HepG2 (cell line): ENCODE measurements at regions of chr4 and their contacts with region 1.

Region 1: GRCh38 chr4:7192252-7193029 is at the start of gene SORCS2:
- DNase-seq: peak; percentile 12
- ATAC-seq: peak; percentile 89
- H3K4me3 ChIP-seq: peak within 1 kb of the TSS in 1 of 3 experiments; percentile 33; a peak in 1 of 6 replicates
- H3K27ac ChIP-seq: no peak within 1 kb of the TSS
- H3K4me1 ChIP-seq: no peaks in the 10 kb centered on the region
- H3K27me3 ChIP-seq: peaks cover 11 to 87% of the 10 kb centered on the region in 2 experiments; a peak in 4 of 5 replicates
- CTCF ChIP-seq: peak; percentile 55
- EP300 ChIP-seq: no peak
- POLR2A ChIP-seq: no peak
- RAD21 ChIP-seq: peak; percentile 95
- total RNA-seq, gene SORCS2: 0.66 and 1.0 TPM in 2 replicates

Region 2: DNA sequence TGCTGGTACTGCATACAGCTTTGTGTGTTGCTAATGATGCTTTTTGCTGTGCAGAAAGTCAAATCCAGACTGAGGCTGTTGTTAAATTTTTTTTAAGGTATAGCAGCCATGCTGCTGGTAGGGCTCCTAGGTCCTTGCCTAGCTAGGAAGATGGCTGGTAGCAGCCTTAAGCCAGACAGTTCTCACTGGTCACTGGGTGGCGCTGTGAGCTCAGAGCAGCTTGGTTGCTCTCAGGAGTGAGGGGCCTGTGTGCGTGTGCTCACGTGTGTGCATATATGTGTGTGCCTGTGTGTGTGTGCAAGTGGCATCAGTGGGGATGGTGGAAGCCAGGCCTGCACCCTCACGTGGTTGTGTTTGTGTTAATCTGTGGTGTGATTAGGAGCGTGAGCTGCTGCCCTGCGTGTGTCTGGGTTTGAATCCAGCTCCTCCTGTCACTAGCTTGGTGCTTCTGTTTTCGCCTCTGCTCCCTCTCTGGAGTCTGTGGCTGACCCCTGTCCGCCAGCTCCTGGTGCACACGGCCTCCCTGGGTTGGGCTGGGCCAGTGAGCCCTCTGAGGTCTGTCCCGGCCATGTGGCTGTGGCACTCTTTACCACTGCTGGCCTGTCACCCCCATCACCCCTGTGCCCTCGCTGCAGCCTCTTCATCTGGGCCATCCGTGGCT is 46.0 kb after region 1 on chr4:
- CTCF ChIA-PET with region 1: no interaction called
- POLR2A ChIA-PET with region 1: no interaction called
- in situ Hi-C with region 1: no loop called
- intact Hi-C with region 1: no loop called
- DNase-seq: no peak
- ATAC-seq: no peak
- H3K4me3 ChIP-seq: no peak overlapping the region
- H3K27ac ChIP-seq: no peak overlapping the region
- H3K4me1 ChIP-seq: no peaks in the 10 kb centered on the region
- H3K27me3 ChIP-seq: peaks cover 10 to 19% of the 10 kb centered on the region in 2 experiments
- CTCF ChIP-seq: no peak
- EP300 ChIP-seq: no peak
- POLR2A ChIP-seq: no peak
- RAD21 ChIP-seq: no peak

Region 3: GRCh38 chr4:7295911-7296660 is 103.6 kb after region 1 on chr4:
- CTCF ChIA-PET with region 1: interaction called, 4 read pairs
- POLR2A ChIA-PET with region 1: no interaction called
- in situ Hi-C with region 1: loop called (anchors 5 kb)
- intact Hi-C with region 1: loop called (anchors 1 kb)
- DNase-seq: no peak
- ATAC-seq: peak; percentile 63; the same call in 2 of the 3 replicates
- H3K4me3 ChIP-seq: no peak overlapping the region
- H3K27ac ChIP-seq: no peak overlapping the region
- H3K4me1 ChIP-seq: no peaks in the 10 kb centered on the region
- H3K27me3 ChIP-seq: peaks cover 11 to 70% of the 10 kb centered on the region in 2 experiments; a peak in 4 of 5 replicates
- CTCF ChIP-seq: peak; percentile 74
- EP300 ChIP-seq: no peak
- POLR2A ChIP-seq: no peak
- RAD21 ChIP-seq: peak; percentile 59

Region 4: DNA sequence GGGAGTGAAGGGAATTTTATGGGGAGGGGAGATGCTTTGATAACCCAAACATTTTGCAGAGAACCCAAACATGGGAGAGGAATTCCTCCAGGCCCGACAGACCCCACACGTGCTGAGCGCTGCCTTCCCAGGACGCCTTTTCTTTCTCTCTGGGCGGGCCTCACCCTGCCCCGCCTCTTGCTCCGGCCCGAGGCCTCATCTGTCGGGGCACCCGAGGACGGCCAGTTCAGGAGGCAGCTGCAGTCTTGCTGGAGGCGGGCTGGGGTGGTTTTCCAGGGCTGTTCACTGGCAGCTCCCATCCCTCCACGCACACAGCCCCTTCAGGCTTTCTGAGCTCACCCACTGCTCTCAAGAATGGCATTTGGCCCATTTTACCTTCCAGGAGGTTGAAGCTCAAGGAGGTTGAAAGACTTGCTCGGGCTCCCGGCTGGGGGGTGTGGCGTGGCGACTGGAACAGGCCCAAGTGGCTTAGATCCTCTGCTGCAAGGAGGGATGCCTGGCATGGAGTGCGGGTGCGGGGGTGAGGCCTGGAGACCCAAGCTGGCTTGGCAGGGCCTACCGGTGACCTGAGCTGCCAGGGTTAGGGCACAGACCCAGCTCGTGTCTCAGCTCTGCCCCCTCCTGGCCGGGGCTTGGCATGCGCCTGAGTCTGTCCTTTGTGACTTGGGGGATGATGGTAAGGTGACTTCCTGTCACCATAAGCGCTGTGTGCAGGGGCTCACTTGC is 143.1 kb after region 1 on chr4:
- CTCF ChIA-PET with region 1: interaction called, 13 read pairs
- POLR2A ChIA-PET with region 1: no interaction called
- in situ Hi-C with region 1: loop called (anchors 5 kb)
- intact Hi-C with region 1: loop called (anchors 10 kb)
- DNase-seq: peak; percentile 36
- ATAC-seq: peak; percentile 90
- H3K4me3 ChIP-seq: no peak overlapping the region
- H3K27ac ChIP-seq: no peak overlapping the region
- H3K4me1 ChIP-seq: no peaks in the 10 kb centered on the region
- H3K27me3 ChIP-seq: peaks cover 10 to 45% of the 10 kb centered on the region in 2 experiments; a peak in 4 of 5 replicates
- CTCF ChIP-seq: peak; percentile 88
- EP300 ChIP-seq: no peak
- POLR2A ChIP-seq: no peak
- RAD21 ChIP-seq: 0 out of 2 replicates have a peak, but pooled peaks have one; percentile 31

Region 5: DNA sequence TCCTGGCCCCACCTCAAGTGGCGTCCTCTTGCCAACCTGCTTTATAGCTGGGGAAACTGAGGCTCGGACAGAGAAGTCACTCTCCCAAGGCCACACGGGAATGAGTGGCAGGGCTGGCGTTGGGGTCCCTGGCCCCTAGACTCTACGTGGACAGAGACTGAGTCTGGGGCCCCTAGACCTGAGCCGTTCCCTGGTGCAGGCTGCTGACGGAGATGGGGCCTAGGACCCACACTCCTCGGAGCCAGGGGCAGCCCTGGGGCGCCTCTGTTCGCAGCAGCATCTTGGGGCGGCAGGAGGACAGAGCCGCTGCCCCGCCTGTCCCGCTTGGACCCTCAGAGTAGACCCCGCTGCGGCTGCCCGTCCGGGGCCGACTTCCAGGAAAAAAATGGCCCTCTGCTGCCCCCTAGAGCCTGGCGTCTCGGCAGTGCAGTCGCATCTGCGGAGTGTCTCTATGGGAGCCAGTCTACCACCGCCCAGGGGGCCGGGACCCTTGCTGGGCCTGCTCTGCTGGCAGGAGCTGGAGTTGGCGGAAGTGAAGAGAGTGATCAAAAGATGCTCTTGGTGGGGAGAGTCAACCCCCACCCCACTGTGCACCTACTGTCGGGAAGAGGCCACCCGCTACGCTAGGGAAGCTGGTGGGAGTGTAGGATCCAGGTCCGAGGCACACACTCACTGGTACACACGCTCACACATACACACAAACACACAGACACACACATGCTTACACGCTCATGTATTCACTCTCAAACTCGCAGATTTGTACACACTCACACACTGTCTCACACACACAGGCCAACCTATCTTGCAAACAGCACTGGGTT is 527.1 kb after region 1 on chr4:
- CTCF ChIA-PET with region 1: interaction called, 6 read pairs
- POLR2A ChIA-PET with region 1: no interaction called
- in situ Hi-C with region 1: loop called (anchors 10 kb)
- intact Hi-C with region 1: no loop called
- DNase-seq: peak; percentile 29
- ATAC-seq: peak; percentile 91
- H3K4me3 ChIP-seq: no peak overlapping the region; a peak in 1 of 6 replicates
- H3K27ac ChIP-seq: no peak overlapping the region
- H3K4me1 ChIP-seq: 0 out of 2 replicates have a peak, but pooled peaks cover 4% of the 10 kb centered on the region
- H3K27me3 ChIP-seq: no peaks in the 10 kb centered on the region
- CTCF ChIP-seq: peak; percentile 89
- EP300 ChIP-seq: no peak
- POLR2A ChIP-seq: no peak
- RAD21 ChIP-seq: peak; percentile 87